ENCODE measurements at regions of chr1 and their contacts with region 1.

Region 1: GRCh38 chr1:197915862-197916499 is 1.2 kb upstream of the LHX9 start:
- DNase-seq: no peak
- H3K4me3 Mint-ChIP-seq: peak overlapping the region; percentile 23
- H3K27ac Mint-ChIP-seq: no peak overlapping the region
- H3K4me1 Mint-ChIP-seq: peaks cover 81% of the 10 kb centered on the region
- H3K27me3 Mint-ChIP-seq: peaks cover 100% of the 10 kb centered on the region

Region 2: DNA sequence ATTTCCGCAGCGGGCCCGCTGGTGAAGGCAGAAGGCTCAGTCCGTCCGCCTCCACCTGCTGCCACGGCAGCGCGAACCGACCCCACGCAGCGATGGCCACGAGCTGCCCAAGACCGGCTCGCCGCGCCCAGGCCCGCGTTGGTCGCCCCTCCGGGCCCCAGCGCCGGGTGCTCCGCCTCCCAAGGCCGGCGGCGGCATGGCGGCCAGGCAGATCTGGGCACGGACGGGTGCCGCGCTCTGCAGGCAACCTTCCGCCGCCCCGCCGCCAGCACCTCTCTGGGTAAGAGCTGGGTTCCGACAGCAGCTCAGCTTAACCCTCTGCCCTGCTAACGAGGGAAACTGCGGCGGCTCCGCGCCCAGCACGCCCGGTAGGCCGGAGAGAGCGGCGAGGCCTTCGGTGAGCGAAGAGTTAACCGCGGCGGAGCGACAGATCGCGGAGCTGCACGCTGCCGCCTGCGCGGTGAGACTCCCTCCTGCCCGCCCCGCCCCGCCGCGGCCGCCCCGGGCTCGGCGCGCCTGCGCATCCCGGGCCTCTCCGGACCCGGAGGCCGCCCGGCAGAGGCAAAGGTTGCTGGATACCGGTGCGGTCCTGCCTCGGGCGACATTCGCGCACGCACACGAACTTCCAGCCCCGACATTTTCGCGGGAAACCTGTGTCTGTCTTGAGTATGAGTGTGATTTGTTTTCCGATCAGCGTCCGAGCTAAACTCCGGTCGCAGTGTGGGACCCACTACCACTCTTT is 13.4 kb before region 1 on chr1 and contains the start of gene C1orf53:
- CTCF ChIA-PET with region 1: interaction called, 14 read pairs
- POLR2A ChIA-PET with region 1: interaction called, 3 read pairs
- DNase-seq: peak; percentile 74
- H3K4me3 Mint-ChIP-seq: peak within 1 kb of the TSS; percentile 82
- H3K27ac Mint-ChIP-seq: peak within 1 kb of the TSS; percentile 92
- H3K4me1 Mint-ChIP-seq: peaks cover 14% of the 10 kb centered on the region
- H3K27me3 Mint-ChIP-seq: peaks cover 47% of the 10 kb centered on the region
- total RNA-seq, gene C1orf53: 1.2 to 2.0 TPM

Measured in activated CD4-positive, alpha-beta T cell treated with anti-CD3 and anti-CD28 coated beads, Interleukin-2, amount 10 ng/mL, durations not matched to agents 7 days and 5 days (primary cell).